Body of pancreas (tissue), 4 donors: ENCODE measurements at regions of chr6 and their contacts with region 1.

Region 1: DNA sequence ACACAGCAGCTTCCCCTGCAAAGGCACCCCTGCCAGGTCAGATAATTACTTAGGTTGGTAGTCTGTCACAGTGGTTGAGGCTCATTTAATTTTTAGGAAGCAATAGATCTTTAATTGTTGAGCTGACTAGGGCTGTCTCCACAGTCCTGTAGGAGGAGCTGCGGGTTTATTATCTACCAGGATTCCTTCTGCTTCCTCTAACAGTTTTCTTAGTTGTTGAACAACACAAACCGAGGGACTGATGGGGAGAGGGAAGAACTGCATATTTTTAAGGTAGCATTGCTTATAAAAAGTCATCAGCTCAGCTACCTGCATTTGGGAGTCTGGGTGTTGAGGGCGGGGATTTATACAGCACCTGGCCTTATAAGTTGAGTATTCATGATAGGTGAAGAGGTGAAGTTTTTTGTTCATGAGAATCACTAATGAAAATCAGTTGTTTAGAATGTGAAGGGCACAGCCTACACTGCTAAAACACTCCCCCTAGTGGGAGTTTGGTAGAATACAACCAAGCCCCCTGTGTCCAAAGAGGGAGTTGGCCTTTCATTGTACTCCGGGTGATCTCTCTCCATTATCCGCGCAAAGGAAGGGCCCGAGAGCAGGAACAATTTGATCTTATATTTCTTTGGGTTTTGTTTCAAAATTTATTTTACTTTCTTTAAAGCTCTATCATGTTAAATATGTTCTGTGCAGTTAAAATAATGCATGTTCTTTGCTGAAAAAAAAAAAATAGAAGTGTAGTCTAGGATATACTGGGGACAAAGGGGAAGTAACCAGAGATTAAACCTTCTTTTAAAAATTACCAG is 69.6 kb downstream of the SSR1 start:
- DNase-seq: peak; percentile 54 to 72 (median 62)
- ATAC-seq: peak; percentile 14
- H3K4me3 ChIP-seq: no peak overlapping the region
- H3K27ac ChIP-seq: peak overlapping the region; percentile 73 to 93 (median 88)
- H3K4me1 ChIP-seq: peaks cover 56% of the 10 kb centered on the region
- H3K27me3 ChIP-seq: no peaks in the 10 kb centered on the region
- CTCF ChIP-seq: peak; percentile 84 to 90 (median 89)
- POLR2A ChIP-seq: no peak

Region 2: GRCh38 chr6:6696867-6697531 is 546.4 kb before region 1 on chr6:
- intact Hi-C with region 1: loop called (anchors 10 kb)
- DNase-seq: peak; percentile 48 to 74 (median 64)
- ATAC-seq: peak; percentile 62
- H3K4me3 ChIP-seq: no peak overlapping the region
- H3K27ac ChIP-seq: no peak overlapping the region
- H3K4me1 ChIP-seq: peaks cover 13% of the 10 kb centered on the region
- H3K27me3 ChIP-seq: no peaks in the 10 kb centered on the region
- CTCF ChIP-seq: peak; percentile 45 to 74 (median 66)
- POLR2A ChIP-seq: no peak

Region 3: GRCh38 chr6:6826095-6826901 is 417.1 kb before region 1 on chr6:
- intact Hi-C with region 1: no loop called
- DNase-seq: peak in 3 of 4 donors; percentile 33 to 68 (median 37)
- ATAC-seq: no peak
- H3K4me3 ChIP-seq: no peak overlapping the region
- H3K27ac ChIP-seq: no peak overlapping the region
- H3K4me1 ChIP-seq: no peaks in the 10 kb centered on the region
- H3K27me3 ChIP-seq: no peaks in the 10 kb centered on the region
- CTCF ChIP-seq: no peak
- POLR2A ChIP-seq: no peak

Region 4: GRCh38 chr6:7312616-7313504 is 69.5 kb after region 1 on chr6 and contains the start of gene SSR1:
- intact Hi-C with region 1: no loop called
- DNase-seq: peak; percentile 98
- ATAC-seq: peak; percentile 99
- H3K4me3 ChIP-seq: peak within 1 kb of the TSS; percentile 87 to 96
- H3K27ac ChIP-seq: peak within 1 kb of the TSS; percentile 92 to 99 (median 94)
- H3K4me1 ChIP-seq: peaks cover 31% of the 10 kb centered on the region
- H3K27me3 ChIP-seq: no peaks in the 10 kb centered on the region
- CTCF ChIP-seq: no peak
- POLR2A ChIP-seq: peak; percentile 88 to 96 (median 95)
- total RNA-seq, gene SSR1: 50.1 TPM

Region 5: DNA sequence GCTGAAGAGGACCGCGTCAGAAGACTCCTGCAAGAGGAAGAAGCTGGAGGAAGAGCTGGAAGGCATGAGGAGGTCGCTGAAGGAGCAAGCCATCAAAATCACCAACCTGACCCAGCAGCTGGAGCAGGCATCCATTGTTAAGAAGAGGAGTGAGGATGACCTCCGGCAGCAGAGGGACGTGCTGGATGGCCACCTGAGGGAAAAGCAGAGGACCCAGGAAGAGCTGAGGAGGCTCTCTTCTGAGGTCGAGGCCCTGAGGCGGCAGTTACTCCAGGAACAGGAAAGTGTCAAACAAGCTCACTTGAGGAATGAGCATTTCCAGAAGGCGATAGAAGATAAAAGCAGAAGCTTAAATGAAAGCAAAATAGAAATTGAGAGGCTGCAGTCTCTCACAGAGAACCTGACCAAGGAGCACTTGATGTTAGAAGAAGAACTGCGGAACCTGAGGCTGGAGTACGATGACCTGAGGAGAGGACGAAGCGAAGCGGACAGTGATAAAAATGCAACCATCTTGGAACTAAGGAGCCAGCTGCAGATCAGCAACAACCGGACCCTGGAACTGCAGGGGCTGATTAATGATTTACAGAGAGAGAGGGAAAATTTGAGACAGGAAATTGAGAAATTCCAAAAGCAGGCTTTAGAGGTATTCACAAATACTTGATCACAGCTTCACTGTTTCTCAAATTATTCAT is 337.7 kb after region 1 on chr6:
- intact Hi-C with region 1: no loop called
- DNase-seq: no peak
- ATAC-seq: no peak
- H3K4me3 ChIP-seq: no peak overlapping the region
- H3K27ac ChIP-seq: no peak overlapping the region
- H3K4me1 ChIP-seq: no peaks in the 10 kb centered on the region
- H3K27me3 ChIP-seq: no peaks in the 10 kb centered on the region
- CTCF ChIP-seq: no peak
- POLR2A ChIP-seq: no peak